ENCODE measurements at regions of chr12 and their contacts with region 1.

Region 1: GRCh38 chr12:674272-674781 is 11.1 kb upstream of the NINJ2 start:
- DNase-seq: peak; percentile 73
- H3K4me3 Mint-ChIP-seq: peak overlapping the region; percentile 72
- H3K27ac Mint-ChIP-seq: peak overlapping the region; percentile 89
- H3K4me1 Mint-ChIP-seq: peaks cover 74% of the 10 kb centered on the region
- H3K27me3 Mint-ChIP-seq: no peaks in the 10 kb centered on the region

Region 2: GRCh38 chr12:422526-422925 is 251.8 kb before region 1 on chr12:
- intact Hi-C with region 1: no loop called
- DNase-seq: no peak
- H3K4me3 Mint-ChIP-seq: no peak overlapping the region
- H3K27ac Mint-ChIP-seq: no peak overlapping the region
- H3K4me1 Mint-ChIP-seq: no peaks in the 10 kb centered on the region
- H3K27me3 Mint-ChIP-seq: no peaks in the 10 kb centered on the region

Region 3: DNA sequence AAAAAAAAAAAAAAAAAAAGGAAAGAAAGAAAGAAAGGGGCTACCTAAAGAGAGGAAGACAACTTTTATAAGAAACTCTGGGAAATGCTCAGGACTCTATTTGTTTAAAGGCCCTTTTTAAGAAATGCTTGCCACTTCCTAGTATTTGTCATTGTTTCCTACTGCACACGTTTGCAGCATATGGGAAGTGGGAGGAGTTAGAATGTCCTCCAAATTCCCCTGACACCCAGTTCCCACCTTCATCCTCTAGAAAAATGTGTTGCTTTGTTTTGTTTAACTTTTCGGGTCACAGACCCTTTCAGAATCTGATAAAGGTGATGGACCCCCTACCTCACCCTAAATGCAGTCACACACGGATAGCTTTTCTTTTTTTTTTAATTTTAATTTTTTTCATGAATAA is 51.9 kb before region 1 on chr12:
- intact Hi-C with region 1: loop called (anchors 2 kb)
- DNase-seq: peak; percentile 28
- H3K4me3 Mint-ChIP-seq: peak overlapping the region; percentile 68
- H3K27ac Mint-ChIP-seq: peak overlapping the region; percentile 96
- H3K4me1 Mint-ChIP-seq: peaks cover 62% of the 10 kb centered on the region
- H3K27me3 Mint-ChIP-seq: no peaks in the 10 kb centered on the region

Region 4: DNA sequence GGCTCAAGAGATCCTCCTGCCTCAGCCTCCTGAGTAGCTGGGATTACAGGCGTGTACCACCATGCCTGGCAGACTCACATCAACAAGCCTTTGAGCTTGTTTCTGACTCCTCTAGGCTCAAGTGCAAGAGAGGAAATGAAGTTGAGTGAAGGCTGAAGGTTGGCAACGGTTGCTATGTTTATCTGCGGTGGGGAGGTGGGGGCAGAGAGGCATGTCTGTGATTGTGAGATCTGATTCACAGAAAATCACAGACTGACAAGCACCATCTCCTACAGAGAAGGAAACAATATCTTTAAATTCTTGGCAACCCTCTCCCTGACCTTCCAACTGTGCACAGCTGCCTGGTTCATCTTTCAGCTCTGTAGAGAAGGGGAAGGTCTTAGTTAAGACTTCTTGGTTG is 11.1 kb after region 1 on chr12:
- intact Hi-C with region 1: loop called (anchors 1 kb)
- DNase-seq: peak; percentile 79
- H3K4me3 Mint-ChIP-seq: peak overlapping the region; percentile 15
- H3K27ac Mint-ChIP-seq: peak overlapping the region; percentile 90
- H3K4me1 Mint-ChIP-seq: peaks cover 37% of the 10 kb centered on the region
- H3K27me3 Mint-ChIP-seq: no peaks in the 10 kb centered on the region

Region 5: GRCh38 chr12:737122-737739 is 62.9 kb after region 1 on chr12:
- intact Hi-C with region 1: no loop called
- DNase-seq: no peak
- H3K4me3 Mint-ChIP-seq: no peak overlapping the region
- H3K27ac Mint-ChIP-seq: no peak overlapping the region
- H3K4me1 Mint-ChIP-seq: peaks cover 8% of the 10 kb centered on the region
- H3K27me3 Mint-ChIP-seq: no peaks in the 10 kb centered on the region

Region 6: GRCh38 chr12:795305-795704 is 121.0 kb after region 1 on chr12:
- intact Hi-C with region 1: loop called (anchors 1 kb)
- DNase-seq: no peak
- H3K4me3 Mint-ChIP-seq: peak overlapping the region; percentile 6
- H3K27ac Mint-ChIP-seq: peak overlapping the region; percentile 87
- H3K4me1 Mint-ChIP-seq: peaks cover 64% of the 10 kb centered on the region
- H3K27me3 Mint-ChIP-seq: no peaks in the 10 kb centered on the region